ENCODE measurements at regions of chr4 and their contacts with region 1.

Region 1: DNA sequence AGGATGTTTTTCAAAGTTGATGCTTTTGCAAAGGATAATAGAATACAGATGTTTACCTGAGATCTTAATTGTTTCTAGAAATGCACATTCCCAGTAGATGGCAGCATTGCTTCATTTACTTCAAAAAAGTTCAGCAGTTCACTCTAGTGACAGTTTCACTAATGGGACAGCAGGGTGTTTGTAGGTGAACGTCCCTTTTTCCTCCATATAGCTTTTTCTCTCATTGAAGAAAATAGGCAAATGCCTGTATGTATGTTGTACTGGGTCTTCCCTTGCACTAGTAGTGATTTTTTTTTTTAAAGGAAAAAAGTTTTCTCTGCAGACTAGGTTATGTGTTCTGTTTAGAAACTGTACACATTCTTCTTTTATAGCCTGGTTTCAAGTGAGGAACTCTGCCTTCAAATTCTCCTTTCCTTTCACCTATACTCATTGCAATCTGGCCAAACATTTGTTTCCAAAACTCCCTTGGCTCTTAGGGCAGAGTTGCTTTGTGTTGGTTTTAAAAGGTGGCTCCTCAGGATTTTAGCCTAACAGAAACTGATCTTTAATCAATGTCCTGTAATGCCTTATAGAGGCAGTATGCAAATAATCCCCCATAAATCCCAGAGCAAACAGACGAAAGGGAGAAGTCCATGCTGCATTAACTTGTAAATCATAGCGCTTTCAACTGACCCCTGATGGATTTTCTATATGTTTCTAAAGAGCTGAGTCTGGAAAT is 86.3 kb downstream of the EGF start:
- DNase-seq: no peak

Region 2: DNA sequence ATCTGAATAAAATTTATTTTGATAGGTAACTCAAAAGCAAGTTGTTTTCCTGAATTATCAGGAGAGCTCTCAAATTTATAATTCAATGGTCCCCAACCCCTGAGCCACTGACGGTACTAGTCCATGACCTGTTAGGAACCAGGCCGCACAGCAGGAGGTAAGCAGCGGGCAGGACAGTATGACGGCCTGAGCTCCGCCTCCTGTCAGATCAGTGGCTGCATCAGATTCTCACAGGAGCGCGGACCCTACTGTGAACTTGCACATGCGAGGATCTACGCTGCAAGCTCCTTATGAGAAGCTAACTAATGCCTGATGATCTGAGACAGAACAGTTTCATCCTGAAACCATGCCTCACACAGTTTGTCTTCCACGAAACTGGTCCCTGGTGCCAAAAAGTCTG is 603.3 kb before region 1 on chr4:
- intact Hi-C with region 1: no loop called
- DNase-seq: peak in 1 of 10 donors; percentile 77

Region 3: GRCh38 chr4:110510955-110511544 is 512.0 kb after region 1 on chr4:
- intact Hi-C with region 1: loop called (anchors 2 kb)
- DNase-seq: no peak

Region 4: GRCh38 chr4:111631215-111631999 is 1632.4 kb after region 1 on chr4:
- intact Hi-C with region 1: loop called (anchors 5 kb)
- DNase-seq: no peak